ENCODE measurements at regions of chr2 and their contacts with region 1.

Region 1: GRCh38 chr2:203446071-203446481 is 89.0 kb downstream of the RAPH1 start:
- DNase-seq: no peak
- H3K4me3 ChIP-seq: no peak overlapping the region
- H3K27ac ChIP-seq: no peak overlapping the region
- H3K4me1 ChIP-seq: no peaks in the 10 kb centered on the region
- CTCF ChIP-seq: no peak

Region 2: GRCh38 chr2:203280428-203281064 is 165.5 kb before region 1 on chr2:
- CTCF ChIA-PET with region 1: no interaction called
- POLR2A ChIA-PET with region 1: interaction called, 10 read pairs
- intact Hi-C with region 1: no loop called
- DNase-seq: no peak
- H3K4me3 ChIP-seq: no peak overlapping the region
- H3K27ac ChIP-seq: no peak overlapping the region
- H3K4me1 ChIP-seq: no peaks in the 10 kb centered on the region
- CTCF ChIP-seq: no peak